ENCODE measurements at regions of chr22 and their contacts with region 1.

Region 1: DNA sequence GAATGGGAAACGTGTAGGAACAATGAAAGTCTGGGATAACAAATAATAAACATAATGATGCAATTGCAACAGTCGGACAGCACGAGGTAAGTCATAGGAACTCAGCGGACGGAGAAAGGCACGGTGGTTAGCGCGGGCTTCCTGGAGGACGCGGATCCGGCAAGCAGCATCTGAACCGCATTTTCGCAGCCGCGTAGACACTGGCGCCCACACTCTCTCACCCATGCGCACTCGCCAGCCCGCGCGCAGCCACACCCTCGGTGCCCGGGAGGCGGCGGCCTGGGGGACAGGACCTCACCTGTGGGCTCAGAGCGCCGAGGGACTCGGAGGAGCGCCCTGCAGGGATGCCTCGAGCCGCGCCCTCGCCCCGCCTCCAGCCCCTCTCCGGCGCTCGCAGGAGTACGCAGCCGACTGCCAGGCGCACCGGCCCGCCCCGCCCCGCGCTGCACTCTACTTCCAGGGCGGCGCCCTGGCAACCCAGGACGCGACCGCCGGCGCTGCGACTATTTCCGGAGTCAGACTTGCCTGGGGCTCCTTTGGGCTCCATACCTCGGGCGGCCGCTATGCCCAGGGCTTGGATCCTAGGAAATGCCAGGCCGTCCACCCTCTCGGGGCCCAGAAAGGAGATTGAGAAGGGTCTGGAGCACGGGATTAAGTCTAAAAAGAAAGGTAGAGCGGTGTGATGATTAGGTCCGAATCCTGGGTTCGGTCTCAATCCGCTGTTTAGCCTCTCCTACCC is at the start of gene TTLL1:
- DNase-seq: peak; percentile 84
- H3K4me3 Mint-ChIP-seq: peak within 1 kb of the TSS; percentile 76
- H3K27ac Mint-ChIP-seq: peak within 1 kb of the TSS; percentile 95
- H3K4me1 Mint-ChIP-seq: peaks cover 5% of the 10 kb centered on the region
- H3K27me3 Mint-ChIP-seq: no peaks in the 10 kb centered on the region
- CTCF ChIP-seq: no peak
- total RNA-seq, gene TTLL1: 3.3 and 3.6 TPM in 2 replicates

Region 2: GRCh38 chr22:42621505-42622002 is 467.6 kb before region 1 on chr22:
- CTCF ChIA-PET with region 1: interaction called, 3 read pairs
- POLR2A ChIA-PET with region 1: no interaction called
- intact Hi-C with region 1: loop called (anchors 1 kb)
- DNase-seq: peak; percentile 76
- H3K4me3 Mint-ChIP-seq: peak overlapping the region; percentile 50
- H3K27ac Mint-ChIP-seq: peak overlapping the region; percentile 93
- H3K4me1 Mint-ChIP-seq: peaks cover 22% of the 10 kb centered on the region
- H3K27me3 Mint-ChIP-seq: no peaks in the 10 kb centered on the region
- CTCF ChIP-seq: peak; percentile 87

Region 3: GRCh38 chr22:42780070-42780540 is 309.0 kb before region 1 on chr22:
- CTCF ChIA-PET with region 1: interaction called, 4 read pairs
- POLR2A ChIA-PET with region 1: no interaction called
- intact Hi-C with region 1: loop called (anchors 1 kb)
- DNase-seq: peak; percentile 89
- H3K4me3 Mint-ChIP-seq: no peak overlapping the region
- H3K27ac Mint-ChIP-seq: no peak overlapping the region
- H3K4me1 Mint-ChIP-seq: no peaks in the 10 kb centered on the region
- H3K27me3 Mint-ChIP-seq: no peaks in the 10 kb centered on the region
- CTCF ChIP-seq: peak; percentile 87

Region 4: DNA sequence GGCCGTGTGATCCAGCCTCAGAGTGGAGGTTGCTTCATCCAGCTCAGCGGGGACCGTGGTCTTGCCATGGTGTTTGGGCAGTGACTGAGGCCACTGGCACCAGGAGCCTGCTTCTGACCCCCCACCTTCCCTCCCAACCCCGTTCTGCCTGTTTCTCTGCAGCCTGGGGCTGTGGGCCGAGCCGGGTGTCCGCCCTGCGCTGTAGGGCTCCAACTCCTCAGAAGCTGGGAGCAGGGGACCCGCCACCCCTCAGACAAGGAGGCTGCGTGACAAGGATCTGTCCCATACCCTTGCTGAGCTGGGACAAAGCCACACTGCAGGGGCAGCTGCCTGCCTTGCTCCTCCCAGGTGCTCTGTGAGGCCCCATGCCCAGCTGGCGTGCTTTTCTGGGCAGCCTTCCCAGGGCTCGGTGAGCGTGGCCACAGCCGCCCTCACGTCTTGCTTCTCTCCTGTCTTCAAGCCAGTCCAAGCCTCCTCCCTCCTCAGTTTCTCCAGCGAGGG is 220.3 kb before region 1 on chr22:
- CTCF ChIA-PET with region 1: interaction called, 10 read pairs
- POLR2A ChIA-PET with region 1: no interaction called
- intact Hi-C with region 1: loop called (anchors 1 kb)
- DNase-seq: no peak
- H3K4me3 Mint-ChIP-seq: no peak overlapping the region
- H3K27ac Mint-ChIP-seq: no peak overlapping the region
- H3K4me1 Mint-ChIP-seq: no peaks in the 10 kb centered on the region
- H3K27me3 Mint-ChIP-seq: no peaks in the 10 kb centered on the region
- CTCF ChIP-seq: no peak

Region 5: GRCh38 chr22:43066844-43067385 is 22.2 kb before region 1 on chr22:
- CTCF ChIA-PET with region 1: interaction called, 5 read pairs
- POLR2A ChIA-PET with region 1: interaction called, 3 read pairs
- intact Hi-C with region 1: loop called (anchors 2 kb)
- DNase-seq: peak; percentile 89
- H3K4me3 Mint-ChIP-seq: peak overlapping the region; percentile 46
- H3K27ac Mint-ChIP-seq: peak overlapping the region; percentile 96
- H3K4me1 Mint-ChIP-seq: peaks cover 10% of the 10 kb centered on the region
- H3K27me3 Mint-ChIP-seq: no peaks in the 10 kb centered on the region
- CTCF ChIP-seq: no peak

Measured in MCF 10A (cell line).